Right ventricle myocardium inferior (tissue), 1 donor: ENCODE measurements at regions of chr11 and their contacts with region 1.

Region 1: GRCh38 chr11:77994412-77995362 is at the start of gene INTS4:
- DNase-seq: peak; percentile 100
- ATAC-seq: peak; percentile 99
- total RNA-seq, gene INTS4: 15.6 TPM

Region 2: GRCh38 chr11:77820563-77821348 is 173.9 kb before region 1 on chr11 and contains the starts of genes AAMDC and RSF1:
- intact Hi-C with region 1: loop called (anchors 2 kb)
- DNase-seq: peak; percentile 99
- ATAC-seq: peak; percentile 96
- total RNA-seq, gene AAMDC: 139 TPM
- total RNA-seq, gene RSF1: 34.8 TPM

Region 3: GRCh38 chr11:78045851-78046485 is 51.3 kb after region 1 on chr11:
- intact Hi-C with region 1: loop called (anchors 5 kb)
- DNase-seq: peak; percentile 90
- ATAC-seq: peak; percentile 95

Region 4: GRCh38 chr11:78079232-78080083 is 84.8 kb after region 1 on chr11 and contains the start of gene NDUFC2:
- intact Hi-C with region 1: loop called (anchors 1 kb)
- DNase-seq: peak; percentile 91
- ATAC-seq: peak; percentile 92
- total RNA-seq, gene NDUFC2: 337 TPM